PC-9 (cell line): ENCODE measurements at regions of chr11 and their contacts with region 1.

Region 1: DNA sequence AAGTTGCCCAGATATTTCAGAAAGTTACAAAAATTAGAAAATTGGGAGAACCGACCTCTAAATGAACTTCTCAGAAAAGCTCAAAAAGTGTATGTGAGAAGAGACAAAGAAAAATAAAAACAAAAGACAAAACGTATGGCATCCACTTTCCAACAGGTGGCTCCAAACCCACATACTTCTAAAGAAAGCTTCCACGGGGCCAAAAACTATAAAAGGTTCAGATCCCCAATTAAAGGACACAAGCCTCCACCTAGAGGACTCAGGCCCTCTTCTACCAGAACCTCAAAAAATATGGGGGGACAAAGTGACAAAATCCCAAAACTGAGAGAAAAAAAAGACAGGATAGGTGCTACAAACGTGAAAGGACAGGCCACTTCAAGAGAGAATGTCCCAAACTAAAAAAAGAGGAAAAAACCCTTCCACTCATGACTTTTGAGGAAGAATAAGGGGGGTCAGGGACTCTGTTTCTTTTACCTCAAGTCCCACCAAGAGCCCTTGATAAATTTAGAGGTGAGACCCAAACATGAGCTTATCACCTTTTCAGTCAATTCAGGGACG is 8.8 kb downstream of the SCGB2A1 start:
- DNase-seq: no peak
- H3K4me3 ChIP-seq: no peak overlapping the region
- H3K27ac ChIP-seq: no peak overlapping the region
- H3K4me1 ChIP-seq: no peaks in the 10 kb centered on the region
- H3K27me3 ChIP-seq: peaks cover 56% of the 10 kb centered on the region
- CTCF ChIP-seq: peak; percentile 75

Region 2: DNA sequence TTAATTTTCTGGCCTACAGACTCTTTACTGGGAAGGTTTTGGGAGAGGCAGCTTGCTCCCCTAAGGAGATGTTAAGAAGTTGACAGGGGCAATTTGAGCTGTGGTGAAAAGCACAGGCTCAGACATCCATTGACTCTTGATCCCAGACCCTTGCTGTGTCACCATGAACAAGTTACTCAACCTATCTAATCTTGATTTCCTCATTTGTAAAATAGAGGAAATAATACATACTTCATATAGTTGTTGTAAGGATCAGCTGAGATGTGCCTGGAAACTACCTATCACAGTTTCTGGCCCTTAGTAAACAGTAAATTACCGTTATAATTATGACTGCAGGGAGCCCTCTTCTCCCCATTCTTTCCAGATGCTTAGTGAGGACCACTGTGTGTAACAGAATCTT is 98.2 kb after region 1 on chr11:
- CTCF ChIA-PET with region 1: no interaction called
- POLR2A ChIA-PET with region 1: interaction called, 5 read pairs
- intact Hi-C with region 1: loop called (anchors 1 kb)
- DNase-seq: no peak
- H3K4me3 ChIP-seq: no peak overlapping the region
- H3K27ac ChIP-seq: no peak overlapping the region
- H3K4me1 ChIP-seq: no peaks in the 10 kb centered on the region
- H3K27me3 ChIP-seq: peaks cover 82% of the 10 kb centered on the region
- CTCF ChIP-seq: no peak

Region 3: DNA sequence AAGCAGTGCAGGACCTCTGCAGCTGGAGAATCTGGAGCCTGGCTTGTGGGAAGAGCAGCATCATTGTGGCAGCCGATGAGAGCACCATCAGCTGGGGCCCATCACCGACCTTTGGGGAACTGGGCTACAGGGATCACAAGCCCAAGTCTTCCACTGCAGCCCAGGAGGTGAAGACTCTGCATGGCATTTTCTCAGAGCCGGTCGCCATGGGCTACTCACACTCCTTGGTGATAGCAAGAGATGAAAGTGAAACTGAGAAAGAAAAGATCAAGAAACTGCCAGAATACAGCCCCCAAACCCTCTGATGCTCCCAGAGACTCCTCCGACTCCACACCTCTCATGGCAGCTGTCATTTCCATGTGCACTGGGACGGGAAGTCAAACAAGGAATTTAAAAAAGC is 155.6 kb after region 1 on chr11:
- CTCF ChIA-PET with region 1: interaction called, 3 read pairs
- POLR2A ChIA-PET with region 1: no interaction called
- intact Hi-C with region 1: loop called (anchors 1 kb)
- DNase-seq: no peak
- H3K4me3 ChIP-seq: no peak overlapping the region
- H3K27ac ChIP-seq: no peak overlapping the region
- H3K4me1 ChIP-seq: no peaks in the 10 kb centered on the region
- H3K27me3 ChIP-seq: no peaks in the 10 kb centered on the region
- CTCF ChIP-seq: no peak